Heart right ventricle (tissue), 16 donors: ENCODE measurements at regions of chr1 and their contacts with region 1.

Region 1: DNA sequence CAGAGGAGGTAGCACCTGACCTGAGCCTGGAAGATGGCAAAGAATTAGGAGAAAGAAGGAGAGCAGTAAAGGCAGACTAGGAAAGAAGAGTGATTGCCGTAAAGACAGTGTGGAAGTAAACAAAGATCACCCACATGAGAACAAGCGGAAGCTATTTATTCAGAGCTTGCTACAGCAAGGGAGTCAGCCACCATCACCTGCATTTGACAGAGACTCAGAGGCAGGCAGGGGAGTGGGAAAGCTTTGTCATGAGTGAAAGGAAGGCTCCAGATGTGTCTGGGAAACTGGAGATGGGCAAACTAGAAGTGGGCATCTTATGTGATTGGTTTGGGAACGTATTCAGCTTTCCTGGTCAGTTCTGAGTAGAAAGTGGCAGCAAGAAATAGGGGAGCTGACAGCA is 64.5 kb downstream of the NFASC start:
- DNase-seq: no peak
- ATAC-seq: no peak
- H3K4me3 ChIP-seq: no peak overlapping the region
- H3K27ac ChIP-seq: no peak overlapping the region
- H3K4me1 ChIP-seq: peaks cover 0 to 18% (median 9%) of the 10 kb centered on the region in 9 donors
- H3K27me3 ChIP-seq: peaks cover 0 to 6% (median 0%) of the 10 kb centered on the region in 7 donors
- CTCF ChIP-seq: no peak

Region 2: GRCh38 chr1:204909109-204909508 is 26.0 kb before region 1 on chr1:
- intact Hi-C with region 1: loop called in 1 of 10 experiments (anchors 1 kb)
- DNase-seq: no peak
- ATAC-seq: no peak
- H3K4me3 ChIP-seq: no peak overlapping the region
- H3K27ac ChIP-seq: no peak overlapping the region
- H3K4me1 ChIP-seq: no peaks in the 10 kb centered on the region
- H3K27me3 ChIP-seq: peaks cover 0 to 26% (median 0%) of the 10 kb centered on the region in 7 donors
- CTCF ChIP-seq: no peak